ENCODE measurements at regions of chr19 and their contacts with region 1.

Region 1: DNA sequence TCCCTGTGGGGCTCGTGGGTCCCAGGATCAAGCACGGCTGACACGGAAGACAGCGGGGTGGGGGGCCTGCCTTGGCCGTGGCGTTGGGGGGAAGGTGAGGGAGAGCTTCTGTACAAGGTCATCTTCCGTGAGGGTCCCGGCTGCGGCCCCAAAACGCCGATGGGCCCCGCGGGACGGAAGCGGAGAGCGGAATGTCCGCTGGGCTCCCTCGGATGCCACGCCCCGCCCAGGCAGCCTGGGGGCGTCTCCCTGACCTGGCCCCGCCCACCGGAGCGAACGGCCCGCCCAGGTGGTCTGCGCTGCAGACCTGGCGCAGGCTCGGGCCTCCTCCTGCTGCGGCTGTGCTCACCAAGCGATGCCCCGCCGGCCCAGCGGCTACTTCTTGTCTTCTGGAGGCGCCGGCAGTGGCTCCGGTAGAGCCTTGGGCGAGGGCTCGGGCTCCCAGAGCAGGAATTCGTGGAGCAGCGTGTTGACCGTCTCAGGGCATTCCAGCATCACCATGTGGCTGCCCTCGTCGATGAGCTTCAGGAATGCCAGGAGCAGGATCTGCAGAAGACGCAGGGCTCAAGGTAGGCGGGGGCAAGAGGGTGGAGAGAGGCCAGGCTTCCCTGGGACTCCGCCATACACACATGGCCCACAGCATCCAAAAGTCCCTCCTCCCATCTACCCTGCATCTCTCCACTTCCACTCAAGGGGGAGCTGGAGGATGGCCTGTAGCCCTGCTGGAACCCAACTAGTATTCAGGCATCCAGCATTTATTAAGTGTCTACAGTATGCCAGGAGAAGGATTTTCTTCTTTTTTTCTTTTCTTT is 10.7 kb downstream of the ABHD8 start:
- DNase-seq: peak; percentile 92
- H3K4me3 ChIP-seq: peak overlapping the region; percentile 58 to 65 (median 62)
- H3K27ac ChIP-seq: peak overlapping the region; percentile 78 to 90 (median 84)
- H3K4me1 ChIP-seq: peaks cover 0 to 34% (median 21%) of the 10 kb centered on the region in 4 donors
- H3K27me3 ChIP-seq: no peaks in the 10 kb centered on the region
- CTCF ChIP-seq: peak; percentile 66 to 84 (median 69)
- EP300 ChIP-seq: no peak
- POLR2A ChIP-seq: no peak

Region 2: GRCh38 chr19:17390665-17391370 is 98.3 kb after region 1 on chr19:
- intact Hi-C with region 1: loop called (anchors 5 kb)
- DNase-seq: peak; percentile 95
- H3K4me3 ChIP-seq: peak overlapping the region; percentile 44 to 61 (median 48)
- H3K27ac ChIP-seq: no peak overlapping the region
- H3K4me1 ChIP-seq: peaks cover 11 to 34% (median 30%) of the 10 kb centered on the region in 4 donors
- H3K27me3 ChIP-seq: peaks cover 0 to 76% (median 28%) of the 10 kb centered on the region in 4 donors
- CTCF ChIP-seq: peak; percentile 59 to 74 (median 73)
- EP300 ChIP-seq: no peak
- POLR2A ChIP-seq: no peak

Measured in esophagus muscularis mucosa (tissue), 4 donors.